ENCODE measurements at regions of chr5 and their contacts with region 1.

Region 1: DNA sequence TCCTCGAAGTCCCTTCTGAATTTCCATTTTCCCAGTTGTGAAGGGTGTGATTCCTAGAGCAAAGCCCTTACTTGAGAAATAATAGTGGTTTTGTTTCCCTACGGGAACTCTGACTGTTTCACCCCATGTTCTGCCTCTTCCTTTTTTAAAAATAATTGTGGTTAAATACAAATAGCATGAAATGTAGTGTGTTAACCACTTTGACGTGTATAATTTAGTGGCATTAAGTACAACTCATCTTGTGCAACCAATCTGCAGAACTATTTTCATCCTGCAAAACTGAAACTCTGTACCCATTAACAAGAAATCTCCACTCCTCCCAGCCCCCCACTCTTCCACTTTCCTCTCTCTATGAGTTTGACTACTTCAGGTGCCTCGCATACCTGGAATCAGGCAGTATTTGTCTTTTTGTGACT is 35.6 kb upstream of the HAND1 start:
- DNase-seq: no peak
- H3K4me3 ChIP-seq: no peak overlapping the region
- H3K27ac ChIP-seq: no peak overlapping the region
- H3K4me1 ChIP-seq: peaks cover 0 to 37% of the 10 kb centered on the region in 2 experiments; a peak in 1 of 4 replicates
- H3K27me3 ChIP-seq: no peaks in the 10 kb centered on the region; the same call in 1 of the 2 replicates
- CTCF ChIP-seq: no peak
- EP300 ChIP-seq: no peak
- RAD21 ChIP-seq: no peak

Region 2: DNA sequence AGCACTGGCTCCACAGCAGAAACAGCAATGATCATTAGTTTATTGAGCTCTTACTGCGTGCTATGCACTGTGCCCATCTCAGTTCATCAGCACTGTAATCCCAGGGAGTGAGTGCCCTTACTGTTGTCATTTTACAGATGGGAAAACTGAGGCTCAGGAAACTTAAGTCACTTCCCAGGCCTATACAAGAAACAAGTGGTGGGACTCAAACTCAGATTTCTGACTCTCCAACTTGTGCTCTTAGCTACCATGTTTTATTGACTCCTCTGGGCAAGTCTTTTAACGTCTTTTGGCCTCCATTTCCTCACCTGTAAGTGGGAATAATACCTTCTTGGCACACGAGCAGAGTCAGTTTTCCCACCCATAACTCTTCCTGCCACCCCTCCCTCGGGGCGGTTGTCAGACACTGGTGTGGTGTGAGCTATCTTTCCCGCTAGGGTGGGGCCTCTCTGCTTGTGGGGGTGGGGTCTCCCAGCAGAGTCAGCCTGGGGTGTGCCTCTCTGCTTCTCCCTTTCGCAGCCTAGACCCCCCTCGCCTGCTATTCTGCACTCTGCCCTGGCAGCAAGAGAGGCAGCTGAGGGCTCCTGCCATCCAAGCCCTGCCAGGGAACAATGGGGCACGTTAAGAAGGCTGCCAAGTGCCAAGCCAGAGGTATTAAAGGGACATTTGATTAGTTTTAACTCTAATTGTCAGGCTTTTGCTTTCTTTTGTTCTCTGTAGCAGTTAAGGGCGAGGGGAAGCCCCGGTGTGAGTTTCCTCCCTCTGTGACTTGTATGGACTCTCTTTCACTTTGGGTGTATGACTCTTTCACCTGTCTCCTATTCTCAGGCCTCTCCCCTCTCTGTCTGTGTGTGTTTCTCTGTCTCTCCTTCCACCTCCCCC is 311.1 kb before region 1 on chr5:
- CTCF ChIA-PET with region 1: no interaction called
- POLR2A ChIA-PET with region 1: no interaction called
- DNase-seq: no peak
- H3K4me3 ChIP-seq: no peak overlapping the region
- H3K27ac ChIP-seq: no peak overlapping the region
- H3K4me1 ChIP-seq: peaks cover 3 to 19% of the 10 kb centered on the region in 2 experiments; a peak in 3 of 4 replicates
- H3K27me3 ChIP-seq: no peaks in the 10 kb centered on the region
- CTCF ChIP-seq: no peak
- EP300 ChIP-seq: no peak
- RAD21 ChIP-seq: no peak

Region 3: GRCh38 chr5:154472871-154473580 is 40.7 kb before region 1 on chr5:
- CTCF ChIA-PET with region 1: interaction called, 295 read pairs
- POLR2A ChIA-PET with region 1: interaction called, 18 read pairs
- DNase-seq: no peak
- H3K4me3 ChIP-seq: peak overlapping the region in 1 of 2 experiments; percentile 74; a peak in 1 of 4 replicates
- H3K27ac ChIP-seq: peak overlapping the region in 1 of 2 experiments; percentile 96; a peak in 2 of 4 replicates
- H3K4me1 ChIP-seq: peaks cover 0 to 41% of the 10 kb centered on the region in 2 experiments; a peak in 2 of 4 replicates
- H3K27me3 ChIP-seq: peaks cover 45% of the 10 kb centered on the region
- CTCF ChIP-seq: no peak
- EP300 ChIP-seq: no peak
- RAD21 ChIP-seq: no peak

Region 4: GRCh38 chr5:154478224-154478565 is 35.5 kb before region 1 on chr5 and contains the start of gene HAND1:
- CTCF ChIA-PET with region 1: interaction called, 295 read pairs
- POLR2A ChIA-PET with region 1: interaction called, 87 read pairs
- DNase-seq: peak; percentile 99
- H3K4me3 ChIP-seq: peak within 1 kb of the TSS; percentile 60 to 74
- H3K27ac ChIP-seq: peak within 1 kb of the TSS in 1 of 2 experiments; percentile 96; a peak in 2 of 4 replicates
- H3K4me1 ChIP-seq: peaks cover 0 to 46% of the 10 kb centered on the region in 2 experiments; a peak in 1 of 4 replicates
- H3K27me3 ChIP-seq: peaks cover 94% of the 10 kb centered on the region
- CTCF ChIP-seq: no peak
- EP300 ChIP-seq: no peak; a peak in 1 of 4 replicates
- RAD21 ChIP-seq: 0 out of 2 replicates have a peak, but pooled peaks have one; percentile 24
- polyA plus RNA-seq, gene HAND1: 1.1 and 2.6 TPM in 2 replicates

Region 5: GRCh38 chr5:154487541-154487940 is 26.1 kb before region 1 on chr5:
- CTCF ChIA-PET with region 1: interaction called, 93 read pairs
- POLR2A ChIA-PET with region 1: interaction called, 87 read pairs
- DNase-seq: peak; percentile 81
- H3K4me3 ChIP-seq: no peak overlapping the region
- H3K27ac ChIP-seq: peak overlapping the region in 1 of 2 experiments; percentile 100; a peak in 2 of 4 replicates
- H3K4me1 ChIP-seq: peaks cover 0 to 50% of the 10 kb centered on the region in 2 experiments; a peak in 2 of 4 replicates
- H3K27me3 ChIP-seq: peaks cover 50% of the 10 kb centered on the region
- CTCF ChIP-seq: no peak
- EP300 ChIP-seq: peak in 1 of 2 experiments; percentile 99; a peak in 2 of 4 replicates
- RAD21 ChIP-seq: peak; percentile 33; the same call in 1 of the 2 replicates

Region 6: GRCh38 chr5:154603978-154604679 is 90.5 kb after region 1 on chr5:
- CTCF ChIA-PET with region 1: interaction called, 179 read pairs
- POLR2A ChIA-PET with region 1: interaction called, 5 read pairs
- DNase-seq: peak; percentile 91
- H3K4me3 ChIP-seq: peak overlapping the region; percentile 20 to 46; a peak in 2 of 4 replicates
- H3K27ac ChIP-seq: peak overlapping the region in 1 of 2 experiments; percentile 85; a peak in 2 of 4 replicates
- H3K4me1 ChIP-seq: peaks cover 5 to 49% of the 10 kb centered on the region in 2 experiments; a peak in 2 of 4 replicates
- H3K27me3 ChIP-seq: no peaks in the 10 kb centered on the region; the same call in 1 of the 2 replicates
- CTCF ChIP-seq: no peak
- EP300 ChIP-seq: peak; percentile 15 to 98; a peak in 2 of 4 replicates
- RAD21 ChIP-seq: no peak; the same call in 1 of the 2 replicates

Region 7: GRCh38 chr5:154633138-154633537 is 119.5 kb after region 1 on chr5:
- CTCF ChIA-PET with region 1: no interaction called
- POLR2A ChIA-PET with region 1: no interaction called
- DNase-seq: no peak
- H3K4me3 ChIP-seq: no peak overlapping the region
- H3K27ac ChIP-seq: no peak overlapping the region
- H3K4me1 ChIP-seq: peaks cover 0 to 5% of the 10 kb centered on the region in 2 experiments; a peak in 1 of 4 replicates
- H3K27me3 ChIP-seq: no peaks in the 10 kb centered on the region; the same call in 1 of the 2 replicates
- CTCF ChIP-seq: no peak
- EP300 ChIP-seq: no peak
- RAD21 ChIP-seq: no peak

Measured in SK-N-SH (cell line).